ENCODE measurements at regions of chr1 and their contacts with region 1.

Region 1: GRCh38 chr1:44594871-44595746 is 79.2 kb downstream of the TMEM53 start:
- DNase-seq: peak; percentile 74
- ATAC-seq: peak; percentile 92
- H3K4me3 Mint-ChIP-seq: no peak overlapping the region
- H3K27ac Mint-ChIP-seq: no peak overlapping the region
- H3K4me1 Mint-ChIP-seq: no peaks in the 10 kb centered on the region
- H3K27me3 Mint-ChIP-seq: peaks cover 6% of the 10 kb centered on the region
- CTCF ChIP-seq: no peak

Region 2: GRCh38 chr1:44361478-44361877 is 233.6 kb before region 1 on chr1:
- CTCF ChIA-PET with region 1: no interaction called
- POLR2A ChIA-PET with region 1: no interaction called
- intact Hi-C with region 1: no loop called
- DNase-seq: no peak
- ATAC-seq: no peak
- H3K4me3 Mint-ChIP-seq: no peak overlapping the region
- H3K27ac Mint-ChIP-seq: no peak overlapping the region
- H3K4me1 Mint-ChIP-seq: peaks cover 11% of the 10 kb centered on the region
- H3K27me3 Mint-ChIP-seq: no peaks in the 10 kb centered on the region
- CTCF ChIP-seq: no peak

Region 3: DNA sequence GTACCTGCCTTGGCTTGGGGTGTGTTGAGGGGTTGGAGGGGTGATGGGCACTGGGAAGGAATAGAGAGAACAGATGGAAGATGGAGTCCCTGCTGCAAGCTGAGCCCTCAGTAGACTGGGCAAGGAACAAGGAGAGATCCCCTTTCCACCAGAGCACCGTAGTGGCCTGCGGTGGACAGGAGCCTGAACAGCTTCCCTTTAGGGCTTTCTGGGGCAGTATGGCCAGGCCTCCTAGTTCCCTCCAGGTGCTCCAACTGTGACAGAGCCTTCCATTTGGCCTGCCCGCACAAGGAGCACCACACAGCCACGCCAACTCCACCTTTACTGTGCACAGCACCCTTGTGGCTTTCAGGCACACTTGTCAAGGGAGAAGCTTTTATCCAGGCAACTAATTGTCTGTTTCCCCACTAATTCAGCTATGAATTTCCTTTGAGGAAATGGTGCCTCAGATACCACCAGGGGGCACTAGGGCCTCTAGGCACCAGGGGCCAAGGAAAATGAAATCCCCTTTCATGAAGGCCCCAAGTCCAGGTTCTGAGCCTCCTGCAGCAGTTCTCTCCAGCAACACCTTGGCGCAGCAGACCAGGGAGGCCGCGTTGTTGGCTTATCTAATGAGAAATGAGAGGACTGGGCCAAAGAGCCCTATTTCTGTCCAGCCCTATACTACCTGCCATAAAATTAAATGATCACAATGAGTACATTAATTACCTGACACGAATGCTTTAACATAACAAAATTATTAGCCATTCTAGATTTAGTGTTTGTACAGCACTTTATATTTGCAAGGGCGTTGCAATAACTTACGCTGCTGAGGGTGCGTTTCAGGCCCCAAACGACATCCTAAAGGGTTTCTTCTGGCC is 217.0 kb before region 1 on chr1:
- CTCF ChIA-PET with region 1: interaction called, 49 read pairs
- POLR2A ChIA-PET with region 1: no interaction called
- intact Hi-C with region 1: loop called (anchors 1 kb)
- DNase-seq: no peak
- ATAC-seq: peak; percentile 45
- H3K4me3 Mint-ChIP-seq: no peak overlapping the region
- H3K27ac Mint-ChIP-seq: no peak overlapping the region
- H3K4me1 Mint-ChIP-seq: no peaks in the 10 kb centered on the region
- H3K27me3 Mint-ChIP-seq: peaks cover 2% of the 10 kb centered on the region
- CTCF ChIP-seq: no peak

Region 4: DNA sequence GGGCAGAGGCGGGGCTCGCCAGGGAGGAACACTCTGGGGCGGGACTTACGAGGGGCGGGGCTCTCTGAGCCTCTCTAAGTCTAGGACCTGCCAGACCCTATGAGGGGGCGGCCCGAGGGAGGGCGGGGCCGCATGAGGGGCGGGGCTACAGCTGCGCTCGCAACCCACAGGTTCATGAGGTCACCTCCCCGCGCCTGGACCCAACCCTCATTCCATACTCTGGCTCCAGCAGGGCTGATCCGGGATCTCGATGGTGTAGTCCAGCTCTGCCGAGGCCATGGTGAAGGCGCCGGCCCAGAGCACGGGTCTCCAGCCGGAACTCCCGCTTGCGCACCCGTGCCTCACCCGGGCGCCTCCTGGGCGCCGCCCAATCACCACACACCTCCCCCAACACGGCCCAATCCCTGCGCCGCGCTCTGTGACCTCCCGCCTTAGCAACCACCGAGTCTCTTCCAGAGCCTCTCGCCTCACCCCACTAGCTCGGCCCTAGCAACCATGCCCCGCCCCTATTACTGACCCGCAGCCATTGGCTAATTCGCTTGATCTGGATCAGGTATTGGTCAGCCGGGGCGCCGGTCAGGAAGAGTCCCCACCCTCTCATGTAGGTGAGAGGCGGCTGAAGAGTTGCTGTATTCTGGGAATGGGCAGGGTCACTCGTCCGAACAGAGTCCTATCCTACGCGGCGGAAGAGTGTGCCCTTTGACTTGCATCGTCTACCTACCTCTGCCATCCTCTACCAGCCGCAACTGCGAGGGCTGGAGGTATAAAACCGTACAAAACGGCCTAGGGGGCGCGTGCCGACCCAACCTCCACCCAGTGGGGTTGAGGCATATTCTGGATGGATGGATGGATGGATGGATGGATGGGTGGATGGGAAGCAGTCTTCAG is 79.2 kb after region 1 on chr1 and contains the starts of genes ARMH1 and TMEM53:
- CTCF ChIA-PET with region 1: no interaction called
- POLR2A ChIA-PET with region 1: no interaction called
- intact Hi-C with region 1: no loop called
- DNase-seq: peak; percentile 98
- ATAC-seq: peak; percentile 90
- H3K4me3 Mint-ChIP-seq: peak within 1 kb of the TSS; percentile 87
- H3K27ac Mint-ChIP-seq: peak within 1 kb of the TSS; percentile 93
- H3K4me1 Mint-ChIP-seq: peaks cover 32% of the 10 kb centered on the region
- H3K27me3 Mint-ChIP-seq: no peaks in the 10 kb centered on the region
- CTCF ChIP-seq: no peak
- total RNA-seq, gene ARMH1: 18.1 and 19.9 TPM in 2 replicates
- total RNA-seq, gene TMEM53: 4.6 and 4.8 TPM in 2 replicates

Region 5: GRCh38 chr1:44707959-44708831 is 113.1 kb after region 1 on chr1:
- CTCF ChIA-PET with region 1: no interaction called
- POLR2A ChIA-PET with region 1: no interaction called
- intact Hi-C with region 1: no loop called
- DNase-seq: no peak
- ATAC-seq: peak; percentile 79
- H3K4me3 Mint-ChIP-seq: peak overlapping the region; percentile 62
- H3K27ac Mint-ChIP-seq: peak overlapping the region; percentile 55
- H3K4me1 Mint-ChIP-seq: peaks cover 34% of the 10 kb centered on the region
- H3K27me3 Mint-ChIP-seq: no peaks in the 10 kb centered on the region
- CTCF ChIP-seq: no peak

Region 6: GRCh38 chr1:45230540-45230939 is 635.4 kb after region 1 on chr1:
- CTCF ChIA-PET with region 1: no interaction called
- POLR2A ChIA-PET with region 1: no interaction called
- intact Hi-C with region 1: no loop called
- DNase-seq: no peak
- ATAC-seq: no peak
- H3K4me3 Mint-ChIP-seq: no peak overlapping the region
- H3K27ac Mint-ChIP-seq: no peak overlapping the region
- H3K4me1 Mint-ChIP-seq: no peaks in the 10 kb centered on the region
- H3K27me3 Mint-ChIP-seq: peaks cover 5% of the 10 kb centered on the region
- CTCF ChIP-seq: no peak

Measured in activated B cell treated with CpG ODN at 0.5 μM for 24 hours (primary cell).